ENCODE measurements at regions of chr7 and their contacts with region 1.

Region 1: DNA sequence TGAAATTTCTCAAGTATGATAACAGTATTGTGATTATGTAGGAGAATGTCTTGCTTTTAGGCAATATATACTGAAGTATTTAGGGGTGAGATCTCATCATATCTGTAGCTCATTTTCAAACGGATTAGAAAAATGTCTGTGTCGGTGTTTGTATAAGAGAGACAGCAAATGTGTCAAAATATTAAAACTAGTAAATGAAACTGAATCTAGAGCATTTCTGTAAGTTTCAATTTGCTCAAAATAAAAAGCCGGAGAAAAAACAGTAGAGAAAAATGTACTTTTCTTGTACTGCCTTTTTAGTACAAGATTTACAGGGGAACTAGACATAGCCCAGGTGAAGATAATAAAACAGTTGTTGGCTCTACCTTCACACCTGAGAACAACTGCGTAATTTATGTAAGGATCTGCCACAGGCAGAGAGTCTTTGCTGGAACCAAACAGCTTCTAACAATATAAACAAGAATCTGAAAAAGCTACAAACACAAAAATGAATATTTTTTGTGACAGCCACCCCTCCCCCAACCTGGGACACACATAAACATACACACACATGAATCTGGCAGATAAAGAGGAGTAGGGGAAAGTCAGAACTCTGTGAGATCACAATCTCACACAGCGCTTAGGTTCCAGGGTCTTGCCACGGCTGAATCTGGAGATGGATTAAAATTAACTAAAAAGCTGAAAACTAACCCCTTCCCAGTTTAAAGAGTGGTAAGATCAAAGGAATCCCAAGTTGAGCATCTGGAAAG is 153.3 kb downstream of the AVL9 start:
- DNase-seq: no peak
- ATAC-seq: no peak
- H3K4me3 ChIP-seq: no peak overlapping the region
- H3K4me1 ChIP-seq: no peaks in the 10 kb centered on the region
- CTCF ChIP-seq: no peak

Region 2: DNA sequence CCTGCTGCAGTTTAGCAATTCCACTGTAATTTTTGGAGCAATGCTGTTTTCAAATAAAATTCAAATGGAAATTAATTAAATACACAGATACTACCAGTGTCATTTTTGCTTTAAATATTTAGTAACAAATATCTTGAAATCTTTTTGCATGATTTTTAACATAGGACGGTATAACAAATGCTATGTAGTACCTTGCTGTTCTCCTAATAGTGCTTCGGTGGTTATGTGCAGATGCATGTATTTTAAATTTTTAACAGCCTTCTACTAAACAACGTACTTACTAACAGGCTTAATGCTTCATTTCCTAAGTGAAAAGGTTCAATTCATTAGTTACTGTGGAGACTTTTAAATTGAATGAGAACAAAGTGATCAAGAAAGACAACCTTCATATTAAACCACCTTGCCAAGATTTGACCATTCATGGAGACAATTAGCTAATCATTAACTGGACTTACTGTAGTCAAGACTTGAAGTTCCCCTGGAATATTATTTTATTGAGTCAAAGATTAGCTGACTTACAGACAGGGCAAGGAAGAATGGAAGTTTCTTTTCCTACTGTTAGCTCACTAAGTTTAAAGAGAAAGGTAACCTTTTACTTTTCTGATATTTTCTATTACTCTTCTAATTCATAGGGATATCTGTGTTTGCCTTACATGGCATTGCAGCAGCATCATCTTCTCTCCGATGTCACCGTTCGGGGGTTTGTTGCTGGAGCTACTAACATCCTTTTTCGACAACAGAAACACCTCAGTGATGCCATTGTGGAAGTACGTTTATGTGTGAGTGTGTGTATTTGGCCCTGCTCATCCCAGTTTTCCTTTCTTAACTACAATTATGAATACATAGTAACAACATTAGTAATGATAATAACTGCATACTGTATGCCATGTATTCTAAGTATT is 78.9 kb before region 1 on chr7:
- intact Hi-C with region 1: loop called in 1 of 2 experiments (anchors 5 kb)
- DNase-seq: no peak
- ATAC-seq: peak; percentile 89
- H3K4me3 ChIP-seq: no peak overlapping the region
- H3K4me1 ChIP-seq: peaks cover 6% of the 10 kb centered on the region
- CTCF ChIP-seq: no peak